SK-N-SH (cell line): ENCODE measurements at regions of chr6 and their contacts with region 1.

Region 1: GRCh38 chr6:43608310-43608763 is 20.7 kb downstream of the GTPBP2 start:
- DNase-seq: peak; percentile 77
- H3K4me3 ChIP-seq: no peak overlapping the region
- H3K27ac ChIP-seq: no peak overlapping the region
- H3K4me1 ChIP-seq: peaks cover 0 to 10% of the 10 kb centered on the region in 2 experiments; a peak in 2 of 4 replicates
- H3K27me3 ChIP-seq: no peaks in the 10 kb centered on the region
- CTCF ChIP-seq: peak; percentile 88
- EP300 ChIP-seq: no peak
- RAD21 ChIP-seq: peak; percentile 77

Region 2: DNA sequence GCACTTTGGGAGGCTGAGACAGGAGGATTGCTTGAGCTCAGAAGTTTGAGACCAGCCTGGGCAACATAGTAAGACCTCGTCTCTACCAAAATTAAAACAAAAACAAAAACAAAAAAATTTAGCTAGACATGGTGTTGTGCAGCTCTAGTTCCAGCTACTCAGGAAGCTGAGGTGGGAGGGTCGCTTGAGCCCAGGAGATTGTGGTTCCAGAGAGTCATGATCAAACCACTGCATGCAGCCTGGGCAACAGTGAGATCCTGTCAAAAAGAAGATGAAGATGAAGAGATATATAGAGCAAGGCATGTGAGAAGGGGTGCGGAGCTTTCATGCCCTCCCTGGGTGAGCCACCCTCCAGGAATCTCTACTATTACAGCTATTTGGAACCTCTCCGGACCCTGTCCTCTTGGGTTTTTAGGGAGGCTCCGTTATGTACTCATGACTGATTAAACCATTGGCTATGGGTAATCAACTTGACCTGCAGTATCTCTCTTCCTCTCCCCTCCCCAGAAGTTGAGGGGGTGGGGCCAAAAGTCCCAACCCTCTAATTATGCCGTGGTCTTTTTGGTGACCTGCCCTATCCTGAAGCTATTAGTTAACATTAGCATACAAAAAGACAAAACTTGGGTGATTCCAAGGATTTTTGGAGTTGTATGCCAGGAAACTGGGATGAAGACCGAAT is 23.3 kb before region 1 on chr6:
- CTCF ChIA-PET with region 1: interaction called, 22 read pairs
- POLR2A ChIA-PET with region 1: no interaction called
- DNase-seq: no peak
- H3K4me3 ChIP-seq: no peak overlapping the region
- H3K27ac ChIP-seq: no peak overlapping the region
- H3K4me1 ChIP-seq: no peaks in the 10 kb centered on the region
- H3K27me3 ChIP-seq: no peaks in the 10 kb centered on the region
- CTCF ChIP-seq: no peak
- EP300 ChIP-seq: no peak
- RAD21 ChIP-seq: no peak

Region 3: GRCh38 chr6:43593938-43594337 is 14.4 kb before region 1 on chr6:
- CTCF ChIA-PET with region 1: interaction called, 28 read pairs
- POLR2A ChIA-PET with region 1: no interaction called
- DNase-seq: no peak
- H3K4me3 ChIP-seq: no peak overlapping the region
- H3K27ac ChIP-seq: no peak overlapping the region
- H3K4me1 ChIP-seq: no peaks in the 10 kb centered on the region
- H3K27me3 ChIP-seq: no peaks in the 10 kb centered on the region
- CTCF ChIP-seq: no peak
- EP300 ChIP-seq: no peak
- RAD21 ChIP-seq: no peak

Region 4: GRCh38 chr6:43621429-43622180 is 13.3 kb after region 1 on chr6:
- CTCF ChIA-PET with region 1: interaction called, 39 read pairs
- POLR2A ChIA-PET with region 1: interaction called, 3 read pairs
- DNase-seq: no peak
- H3K4me3 ChIP-seq: no peak overlapping the region
- H3K27ac ChIP-seq: no peak overlapping the region
- H3K4me1 ChIP-seq: peaks cover 0 to 3% of the 10 kb centered on the region in 2 experiments; a peak in 1 of 4 replicates
- H3K27me3 ChIP-seq: no peaks in the 10 kb centered on the region
- CTCF ChIP-seq: no peak
- EP300 ChIP-seq: no peak
- RAD21 ChIP-seq: no peak

Region 5: DNA sequence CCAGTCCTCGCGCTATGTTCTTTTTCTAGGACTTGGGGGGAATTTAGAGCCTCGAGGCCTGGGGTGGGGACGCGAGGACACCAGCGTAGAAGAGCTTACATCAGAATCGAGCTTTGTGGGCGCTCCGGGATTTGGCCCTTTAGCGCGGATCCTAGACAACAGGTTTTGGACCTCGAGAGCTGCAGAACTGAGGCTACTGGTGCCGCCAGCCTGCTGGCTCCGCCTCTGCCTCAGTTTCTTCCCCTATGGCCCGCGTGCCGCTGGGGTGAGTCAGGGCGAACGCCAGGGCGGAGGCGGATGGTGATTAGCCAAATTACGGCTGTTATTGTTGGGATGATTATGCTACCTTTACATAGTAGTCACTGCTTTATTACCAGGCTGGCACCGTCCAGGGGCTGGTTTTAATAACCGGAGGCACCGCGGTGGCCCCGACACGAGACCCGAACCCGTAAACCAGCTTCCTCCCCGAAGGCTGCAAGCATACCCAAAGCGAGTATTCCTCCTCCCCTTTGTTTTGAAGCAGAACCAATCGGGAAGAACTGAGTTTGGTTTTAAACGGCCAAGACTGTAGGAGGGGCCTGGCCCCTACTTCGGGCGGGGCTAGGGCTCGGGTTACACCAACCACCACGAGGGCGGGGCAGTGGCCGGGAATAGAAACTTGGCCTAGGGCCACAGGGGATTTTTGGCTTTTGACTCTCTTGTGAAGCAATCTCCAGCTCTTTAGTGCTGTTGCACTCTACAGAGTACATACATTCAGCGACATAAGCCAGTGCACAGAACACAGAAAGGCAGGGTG is 21.4 kb after region 1 on chr6:
- CTCF ChIA-PET with region 1: interaction called, 11 read pairs
- POLR2A ChIA-PET with region 1: interaction called, 6 read pairs
- DNase-seq: peak; percentile 93
- H3K4me3 ChIP-seq: peak overlapping the region; percentile 71 to 72
- H3K27ac ChIP-seq: peak overlapping the region; percentile 92 to 95
- H3K4me1 ChIP-seq: peaks cover 5 to 21% of the 10 kb centered on the region in 2 experiments
- H3K27me3 ChIP-seq: no peaks in the 10 kb centered on the region
- CTCF ChIP-seq: no peak
- EP300 ChIP-seq: 0 out of 4 replicates have a peak, but pooled peaks of 1 of the 2 experiments have one; percentile 38
- RAD21 ChIP-seq: no peak